Activated T-helper 1 cell treated with anti-CD3 and anti-CD28 coated beads, Interleukin-12 subunit alpha, Interleukin-12 subunit beta, Interleukin-2, Interleukin-4 antibody, amounts not matched to agents 30 ng/mL and 10 ng/mL and 1 ng/mL, durations not matched to agents 14 hours and 24 hours and 36 hours (primary cell): ENCODE measurements at regions of chr10 and their contacts with region 1.

Region 1: DNA sequence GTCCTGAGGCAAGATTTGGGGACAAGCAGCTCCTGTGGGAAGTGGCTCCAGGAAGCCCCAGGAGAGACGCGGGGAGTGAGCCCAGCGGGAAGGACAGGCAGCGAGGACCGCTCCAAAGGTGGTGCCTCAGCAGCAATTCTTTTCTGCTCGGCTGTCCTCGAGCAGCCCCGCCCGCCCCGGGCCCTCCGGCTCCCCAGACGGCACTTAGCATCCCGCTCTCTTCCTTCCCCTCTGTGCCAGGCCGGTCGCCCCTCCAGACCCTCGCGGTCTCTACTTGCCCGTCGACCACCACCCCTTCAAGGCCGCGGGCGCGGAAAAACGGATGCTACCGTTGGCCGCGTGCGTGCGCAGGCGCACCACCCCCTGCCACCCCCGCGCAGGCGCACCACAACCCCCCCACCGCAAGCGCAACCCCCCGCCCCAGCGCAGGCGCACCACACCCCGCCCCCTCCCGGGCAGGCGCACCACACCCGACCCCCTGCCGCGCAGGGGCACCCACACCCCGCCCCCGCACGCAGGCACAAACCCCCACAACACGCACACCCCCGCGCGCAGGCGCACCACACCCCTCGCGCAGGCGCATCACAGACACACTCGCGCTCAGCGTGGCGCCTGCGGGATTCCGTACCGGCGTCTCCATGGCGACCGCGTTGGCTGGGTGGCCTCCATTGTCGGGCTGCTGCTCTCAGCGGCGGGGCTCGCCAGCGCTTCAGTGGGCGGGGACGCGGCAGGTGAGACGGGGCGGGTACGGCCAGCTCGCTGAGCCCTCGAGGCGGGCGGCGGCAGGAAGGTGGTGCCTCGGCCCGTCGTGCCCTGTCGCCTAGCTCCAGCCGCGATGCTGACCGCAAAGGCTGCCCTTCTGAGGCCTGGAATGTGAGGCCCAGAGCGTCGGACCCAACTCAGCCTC is at the start of gene LRRC27:
- DNase-seq: peak; percentile 100
- H3K4me3 Mint-ChIP-seq: peak within 1 kb of the TSS; percentile 91
- H3K27ac Mint-ChIP-seq: peak within 1 kb of the TSS; percentile 96
- H3K4me1 Mint-ChIP-seq: peaks cover 58% of the 10 kb centered on the region
- H3K27me3 Mint-ChIP-seq: peaks cover 3% of the 10 kb centered on the region
- total RNA-seq, gene LRRC27: 1.7 and 3.4 TPM in 2 replicates

Region 2: GRCh38 chr10:132185601-132186487 is 145.9 kb before region 1 on chr10:
- intact Hi-C with region 1: loop called (anchors 5 kb)
- DNase-seq: peak; percentile 68
- H3K4me3 Mint-ChIP-seq: peak overlapping the region; percentile 71
- H3K27ac Mint-ChIP-seq: no peak overlapping the region
- H3K4me1 Mint-ChIP-seq: no peaks in the 10 kb centered on the region
- H3K27me3 Mint-ChIP-seq: peaks cover 31% of the 10 kb centered on the region

Region 3: DNA sequence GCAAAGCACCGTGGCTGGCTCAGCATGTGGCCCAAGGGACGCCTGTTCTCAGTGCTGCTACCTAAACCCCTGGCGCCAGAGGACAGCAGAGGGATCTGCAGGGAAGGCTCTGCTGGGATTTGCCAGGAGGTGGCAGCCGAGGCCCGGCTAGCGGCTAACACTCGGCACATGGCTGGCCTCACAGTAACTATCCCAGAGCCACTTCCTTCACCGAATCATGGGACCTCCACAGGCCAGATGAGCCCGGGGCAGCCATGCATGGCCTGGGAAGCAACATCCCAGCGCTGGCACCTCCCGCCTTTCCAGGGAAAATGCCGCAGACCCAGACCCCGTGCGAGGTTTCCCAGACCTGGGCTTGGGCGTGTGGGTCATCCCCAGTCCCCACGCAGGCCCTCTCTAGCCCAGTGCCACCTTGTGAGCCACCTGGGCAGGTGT is 108.6 kb before region 1 on chr10:
- intact Hi-C with region 1: loop called (anchors 1 kb)
- DNase-seq: peak; percentile 64
- H3K4me3 Mint-ChIP-seq: no peak overlapping the region
- H3K27ac Mint-ChIP-seq: no peak overlapping the region
- H3K4me1 Mint-ChIP-seq: no peaks in the 10 kb centered on the region
- H3K27me3 Mint-ChIP-seq: no peaks in the 10 kb centered on the region

Region 4: DNA sequence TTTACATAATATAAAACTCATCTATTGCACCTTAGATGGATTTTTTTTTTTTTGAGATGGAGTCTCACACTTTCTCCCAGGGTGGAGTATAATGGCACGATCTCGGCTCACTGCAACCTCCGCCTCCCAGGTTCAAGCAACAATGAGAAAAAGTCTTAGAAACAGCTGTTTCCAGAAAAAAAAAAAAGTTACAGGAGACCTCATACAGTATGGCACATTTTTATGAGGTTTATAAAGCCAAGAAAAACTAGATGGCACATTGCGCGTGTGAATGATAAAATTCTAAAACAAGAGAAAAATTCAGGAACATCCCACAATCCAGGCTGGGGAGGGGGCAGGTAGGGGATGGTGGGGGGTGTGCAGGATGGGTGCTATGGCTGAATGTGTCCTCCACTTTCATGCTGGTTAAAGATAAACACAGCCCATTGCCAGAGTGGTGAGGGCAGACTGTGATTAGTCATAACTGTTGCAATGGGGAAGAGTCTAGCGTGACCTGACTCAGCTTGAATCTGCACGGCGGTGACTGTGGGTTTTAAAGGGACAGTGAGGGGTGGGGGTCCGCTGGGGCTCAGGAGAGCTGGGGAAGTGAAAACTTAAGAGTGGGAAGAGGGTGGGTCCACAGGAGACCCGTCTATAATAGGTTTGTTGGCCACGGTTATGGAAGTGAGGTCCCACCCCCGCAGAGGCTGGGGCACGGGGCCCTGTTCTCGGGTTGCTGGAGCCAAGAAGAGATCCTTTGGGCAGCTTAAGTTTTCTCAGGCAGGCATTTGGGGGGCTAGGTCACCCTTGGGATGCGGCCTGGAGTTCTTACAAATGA is 11.7 kb before region 1 on chr10:
- intact Hi-C with region 1: loop called (anchors 1 kb)
- DNase-seq: peak; percentile 25
- H3K4me3 Mint-ChIP-seq: no peak overlapping the region
- H3K27ac Mint-ChIP-seq: peak overlapping the region; percentile 21
- H3K4me1 Mint-ChIP-seq: peaks cover 18% of the 10 kb centered on the region
- H3K27me3 Mint-ChIP-seq: no peaks in the 10 kb centered on the region

Region 5: DNA sequence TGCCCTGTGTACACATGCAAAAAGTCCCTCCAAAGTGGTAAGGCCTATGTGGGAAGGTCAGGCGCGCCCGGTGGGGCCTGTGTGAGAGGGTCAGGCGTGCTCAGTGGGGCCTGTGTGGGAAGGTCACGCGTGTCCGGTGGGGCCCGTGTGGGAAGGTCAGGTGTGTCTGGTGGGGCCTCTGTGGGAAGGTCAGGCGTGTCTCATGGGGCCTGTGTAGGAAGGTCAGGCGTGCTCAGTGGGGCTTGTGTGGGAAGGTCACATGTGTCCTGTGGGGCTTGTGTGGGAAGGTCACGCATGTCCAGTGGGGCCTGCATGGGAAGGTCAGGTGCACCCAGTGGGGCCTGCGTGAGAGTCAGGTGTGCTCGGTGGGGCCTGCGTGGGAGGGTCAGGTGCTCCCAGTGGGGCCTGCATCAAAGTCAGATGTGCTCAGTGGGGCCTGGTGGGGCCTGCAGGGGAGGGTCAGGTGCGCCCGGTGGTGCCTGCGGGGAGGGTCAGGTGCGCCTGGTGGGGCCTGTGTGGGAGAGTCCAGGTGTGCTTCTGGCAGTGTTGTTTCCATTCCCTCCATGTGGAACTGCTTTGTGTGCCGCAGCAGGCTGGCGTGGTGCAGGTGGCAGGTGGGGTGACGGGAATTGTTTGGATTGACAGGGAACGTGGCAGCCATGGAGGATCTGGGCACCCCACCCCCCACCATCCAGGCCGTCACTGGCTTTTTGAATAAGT is 15.6 kb after region 1 on chr10:
- intact Hi-C with region 1: no loop called
- DNase-seq: no peak
- H3K4me3 Mint-ChIP-seq: no peak overlapping the region
- H3K27ac Mint-ChIP-seq: no peak overlapping the region
- H3K4me1 Mint-ChIP-seq: no peaks in the 10 kb centered on the region
- H3K27me3 Mint-ChIP-seq: no peaks in the 10 kb centered on the region

Region 6: DNA sequence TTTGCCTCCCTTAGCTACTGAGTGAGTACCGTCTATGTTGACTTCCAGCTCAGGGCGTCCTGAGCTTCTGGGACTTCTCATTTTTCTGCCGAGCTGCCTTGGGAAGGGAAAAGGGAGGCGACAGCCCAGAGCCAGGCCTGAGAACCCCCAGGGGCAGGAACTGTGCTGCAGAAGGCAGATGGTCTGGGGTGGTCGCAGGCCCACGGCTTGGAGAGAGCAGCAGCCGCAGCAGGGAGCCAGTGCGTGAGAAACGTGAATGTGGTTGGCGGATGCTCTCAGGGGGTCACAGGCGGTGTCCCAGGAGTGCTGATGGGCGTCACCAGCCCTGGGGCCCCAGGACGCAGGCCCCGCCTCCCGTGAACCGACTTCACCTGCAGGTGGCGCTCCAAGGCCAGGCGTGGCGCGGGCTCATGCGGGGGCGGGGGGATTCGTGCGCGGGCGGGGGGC is 56.0 kb after region 1 on chr10:
- intact Hi-C with region 1: loop called (anchors 2 kb)
- DNase-seq: peak; percentile 63
- H3K4me3 Mint-ChIP-seq: peak overlapping the region; percentile 47
- H3K27ac Mint-ChIP-seq: peak overlapping the region; percentile 92
- H3K4me1 Mint-ChIP-seq: peaks cover 1% of the 10 kb centered on the region
- H3K27me3 Mint-ChIP-seq: peaks cover 7% of the 10 kb centered on the region

Region 7: GRCh38 chr10:132396495-132397035 is 64.8 kb after region 1 on chr10:
- intact Hi-C with region 1: loop called (anchors 2 kb)
- DNase-seq: peak; percentile 57
- H3K4me3 Mint-ChIP-seq: no peak overlapping the region
- H3K27ac Mint-ChIP-seq: no peak overlapping the region
- H3K4me1 Mint-ChIP-seq: peaks cover 8% of the 10 kb centered on the region
- H3K27me3 Mint-ChIP-seq: peaks cover 4% of the 10 kb centered on the region

Region 8: GRCh38 chr10:132452631-132453469 is 121.1 kb after region 1 on chr10:
- intact Hi-C with region 1: loop called (anchors 1 kb)
- DNase-seq: peak; percentile 85
- H3K4me3 Mint-ChIP-seq: no peak overlapping the region
- H3K27ac Mint-ChIP-seq: peak overlapping the region; percentile 58
- H3K4me1 Mint-ChIP-seq: peaks cover 4% of the 10 kb centered on the region
- H3K27me3 Mint-ChIP-seq: no peaks in the 10 kb centered on the region